Tibial artery (tissue), 4 donors: ENCODE measurements at regions of chr15 and their contacts with region 1.

Region 1: DNA sequence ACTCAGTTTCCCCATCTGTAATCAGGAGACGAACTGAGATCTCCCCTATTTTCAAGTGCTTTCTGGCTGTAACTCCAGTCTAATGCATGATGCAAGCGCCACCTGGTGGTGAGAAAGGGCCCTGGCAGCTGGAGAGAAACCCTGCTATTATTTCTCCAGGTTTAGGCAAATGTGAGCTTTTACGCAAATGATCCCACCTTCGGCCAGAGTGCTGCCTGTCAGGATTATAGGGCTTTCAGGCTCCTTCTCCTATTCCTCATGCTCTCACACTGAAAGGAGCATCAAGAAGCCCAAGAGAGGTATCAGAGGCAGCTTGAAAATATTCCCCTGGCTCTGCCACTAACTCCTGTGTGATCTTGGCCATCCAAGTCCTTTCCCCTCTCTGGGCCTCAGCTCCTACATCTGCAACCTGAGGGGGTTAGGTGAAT is 93.9 kb upstream of the RASGRF1 start:
- DNase-seq: peak; percentile 75 to 81
- H3K4me3 ChIP-seq: no peak overlapping the region
- H3K27ac ChIP-seq: no peak overlapping the region
- H3K4me1 ChIP-seq: no peaks in the 10 kb centered on the region
- H3K27me3 ChIP-seq: peaks cover 0 to 10% of the 10 kb centered on the region in 2 donors
- CTCF ChIP-seq: peak; percentile 83 to 97

Region 2: DNA sequence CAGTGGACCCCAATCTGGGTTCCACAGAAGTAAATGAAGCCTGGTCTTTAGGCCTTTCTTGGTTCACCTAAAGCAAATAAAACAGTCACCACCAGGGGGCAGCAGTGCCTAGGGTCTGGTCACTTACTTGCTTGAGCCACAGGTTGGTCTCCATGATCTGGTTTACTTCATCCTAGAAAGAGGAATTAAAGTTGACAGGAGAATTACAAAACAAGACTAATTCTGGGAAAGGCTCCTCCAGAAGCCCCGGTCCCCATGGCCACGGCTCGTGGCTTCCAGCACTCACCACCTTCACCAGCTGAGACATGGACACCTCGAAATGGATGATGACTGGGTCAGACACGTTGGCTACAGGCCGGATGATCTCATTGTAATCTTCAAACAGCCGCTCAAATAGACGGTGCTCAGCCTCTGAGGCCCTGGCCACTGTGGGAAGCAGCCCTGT is 566.0 kb before region 1 on chr15:
- intact Hi-C with region 1: loop called (anchors 5 kb)
- DNase-seq: peak; percentile 88 to 90
- H3K4me3 ChIP-seq: no peak overlapping the region
- H3K27ac ChIP-seq: no peak overlapping the region
- H3K4me1 ChIP-seq: peaks cover 0 to 24% (median 18%) of the 10 kb centered on the region in 4 donors
- H3K27me3 ChIP-seq: peaks cover 0 to 50% of the 10 kb centered on the region in 2 donors
- CTCF ChIP-seq: peak; percentile 87 to 88

Region 3: DNA sequence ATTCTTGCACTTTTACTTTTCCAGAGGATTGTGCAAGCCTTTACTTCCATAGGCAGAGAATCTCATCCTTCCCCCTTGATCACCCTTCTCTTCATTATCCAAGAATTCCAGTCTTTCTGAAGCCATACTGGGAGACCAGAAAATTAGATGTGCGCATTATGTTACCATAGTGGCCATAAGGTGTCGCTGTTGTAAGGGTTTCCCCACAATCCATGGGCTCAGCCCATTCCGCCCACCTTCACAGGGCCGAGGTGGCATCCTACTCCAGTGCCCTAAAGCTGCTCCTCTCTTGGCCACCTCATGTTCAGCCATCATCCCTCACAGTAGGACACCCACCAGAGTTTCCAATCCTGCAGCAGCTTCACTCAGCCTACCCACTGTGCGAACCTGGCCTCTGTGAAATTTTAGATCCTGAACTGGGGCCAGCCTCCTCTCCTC is 274.7 kb before region 1 on chr15:
- intact Hi-C with region 1: loop called (anchors 10 kb)
- DNase-seq: no peak
- H3K4me3 ChIP-seq: no peak overlapping the region
- H3K27ac ChIP-seq: peak overlapping the region in 1 of 2 donors; percentile 30
- H3K4me1 ChIP-seq: peaks cover 0 to 76% (median 27%) of the 10 kb centered on the region in 4 donors
- H3K27me3 ChIP-seq: no peaks in the 10 kb centered on the region
- CTCF ChIP-seq: peak; percentile 55 to 60

Region 4: GRCh38 chr15:78944669-78945407 is 239.6 kb before region 1 on chr15 and contains the start of gene CTSH:
- intact Hi-C with region 1: no loop called
- DNase-seq: peak; percentile 62 to 78
- H3K4me3 ChIP-seq: peak within 1 kb of the TSS; percentile 52 to 57
- H3K27ac ChIP-seq: peak within 1 kb of the TSS; percentile 49 to 56
- H3K4me1 ChIP-seq: peaks cover 0 to 17% (median 8%) of the 10 kb centered on the region in 4 donors
- H3K27me3 ChIP-seq: no peaks in the 10 kb centered on the region
- CTCF ChIP-seq: no peak

Region 5: GRCh38 chr15:79028411-79028964 is 156.0 kb before region 1 on chr15:
- intact Hi-C with region 1: loop called (anchors 10 kb)
- DNase-seq: peak in 1 of 2 donors; percentile 33
- H3K4me3 ChIP-seq: no peak overlapping the region
- H3K27ac ChIP-seq: no peak overlapping the region
- H3K4me1 ChIP-seq: no peaks in the 10 kb centered on the region
- H3K27me3 ChIP-seq: peaks cover 0 to 3% of the 10 kb centered on the region in 2 donors
- CTCF ChIP-seq: peak; percentile 52 to 53

Region 6: GRCh38 chr15:79084308-79084968 is 100.0 kb before region 1 on chr15:
- intact Hi-C with region 1: no loop called
- DNase-seq: peak in 1 of 2 donors; percentile 56
- H3K4me3 ChIP-seq: no peak overlapping the region
- H3K27ac ChIP-seq: no peak overlapping the region
- H3K4me1 ChIP-seq: peaks cover 0 to 3% (median 1%) of the 10 kb centered on the region in 4 donors
- H3K27me3 ChIP-seq: peaks cover 0 to 46% of the 10 kb centered on the region in 2 donors
- CTCF ChIP-seq: no peak